ENCODE measurements at regions of chr6 and their contacts with region 1.

Region 1: DNA sequence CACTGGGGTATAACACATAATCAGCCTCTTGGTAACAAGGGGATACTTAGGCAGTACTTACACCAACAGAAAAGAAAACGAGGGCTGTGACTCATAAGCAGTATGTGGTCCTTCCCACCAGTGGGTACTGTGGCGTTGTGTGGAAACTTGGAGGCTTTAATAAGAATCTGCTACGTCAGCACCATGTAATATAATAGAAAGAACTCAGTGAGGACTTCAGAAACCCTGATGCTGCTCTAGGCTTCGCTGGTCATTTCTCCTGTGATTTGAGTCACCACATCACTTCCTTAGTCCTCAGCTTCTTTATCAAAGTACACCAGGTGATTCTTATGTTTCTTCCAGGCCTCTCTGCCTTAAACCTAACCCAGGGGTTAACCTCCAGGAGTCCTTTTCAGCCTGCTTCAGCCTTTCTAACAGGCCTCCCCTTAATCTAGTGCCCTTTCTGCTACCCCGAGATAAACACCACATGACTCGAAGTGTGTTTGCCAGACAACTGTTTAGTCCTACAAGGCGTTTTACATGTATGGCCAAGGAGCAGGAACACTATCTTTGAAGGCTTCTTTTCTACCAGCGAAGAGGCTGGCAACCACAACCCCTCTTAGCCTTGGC is 68.5 kb downstream of the FYN start:
- DNase-seq: peak; percentile 84
- ATAC-seq: peak; percentile 77
- H3K4me3 ChIP-seq: no peak overlapping the region
- H3K27ac ChIP-seq: peak overlapping the region; percentile 70
- H3K4me1 ChIP-seq: peaks cover 70% of the 10 kb centered on the region
- H3K27me3 ChIP-seq: no peaks in the 10 kb centered on the region
- CTCF ChIP-seq: peak in 2 of 3 experiments; percentile 24 to 35; a peak in 2 of 6 replicates
- EP300 ChIP-seq: peak; percentile 65 to 88; a peak in 2 of 4 replicates
- POLR2A ChIP-seq: no peak
- RAD21 ChIP-seq: peak; percentile 62

Region 2: GRCh38 chr6:111631903-111632460 is 172.7 kb before region 1 on chr6:
- CTCF ChIA-PET with region 1: no interaction called
- POLR2A ChIA-PET with region 1: no interaction called
- RAD21 ChIA-PET with region 1: no interaction called
- SMC1A ChIA-PET with region 1: no interaction called
- in situ Hi-C with region 1: no loop called
- intact Hi-C with region 1: no loop called
- DNase-seq: no peak
- ATAC-seq: no peak
- H3K4me3 ChIP-seq: no peak overlapping the region
- H3K27ac ChIP-seq: no peak overlapping the region
- H3K4me1 ChIP-seq: no peaks in the 10 kb centered on the region
- H3K27me3 ChIP-seq: 0 out of 4 replicates have a peak, but pooled peaks cover 0 to 4% of the 10 kb centered on the region in 2 experiments
- CTCF ChIP-seq: no peak
- EP300 ChIP-seq: no peak
- POLR2A ChIP-seq: no peak
- RAD21 ChIP-seq: no peak

Region 3: GRCh38 chr6:111750753-111751684 is 53.7 kb before region 1 on chr6:
- CTCF ChIA-PET with region 1: interaction called, 6 read pairs
- POLR2A ChIA-PET with region 1: interaction called, 3 read pairs
- RAD21 ChIA-PET with region 1: interaction called, 9 read pairs
- SMC1A ChIA-PET with region 1: interaction called, 20 read pairs
- in situ Hi-C with region 1: no loop called
- intact Hi-C with region 1: no loop called
- DNase-seq: no peak
- ATAC-seq: peak; percentile 83
- H3K4me3 ChIP-seq: no peak overlapping the region
- H3K27ac ChIP-seq: peak overlapping the region; percentile 85
- H3K4me1 ChIP-seq: peaks cover 69% of the 10 kb centered on the region
- H3K27me3 ChIP-seq: no peaks in the 10 kb centered on the region
- CTCF ChIP-seq: no peak
- EP300 ChIP-seq: peak; percentile 27 to 70; a peak in 2 of 4 replicates
- POLR2A ChIP-seq: no peak
- RAD21 ChIP-seq: peak; percentile 19; the same call in 1 of the 2 replicates

Region 4: GRCh38 chr6:111784433-111784832 is 20.3 kb before region 1 on chr6:
- CTCF ChIA-PET with region 1: interaction called, 3 read pairs
- POLR2A ChIA-PET with region 1: interaction called, 13 read pairs
- RAD21 ChIA-PET with region 1: interaction called, 9 read pairs
- SMC1A ChIA-PET with region 1: interaction called, 71 read pairs
- in situ Hi-C with region 1: no loop called
- intact Hi-C with region 1: no loop called
- DNase-seq: no peak
- ATAC-seq: no peak
- H3K4me3 ChIP-seq: no peak overlapping the region
- H3K27ac ChIP-seq: no peak overlapping the region
- H3K4me1 ChIP-seq: peaks cover 8% of the 10 kb centered on the region
- H3K27me3 ChIP-seq: no peaks in the 10 kb centered on the region
- CTCF ChIP-seq: no peak
- EP300 ChIP-seq: no peak
- POLR2A ChIP-seq: no peak
- RAD21 ChIP-seq: no peak

Region 5: DNA sequence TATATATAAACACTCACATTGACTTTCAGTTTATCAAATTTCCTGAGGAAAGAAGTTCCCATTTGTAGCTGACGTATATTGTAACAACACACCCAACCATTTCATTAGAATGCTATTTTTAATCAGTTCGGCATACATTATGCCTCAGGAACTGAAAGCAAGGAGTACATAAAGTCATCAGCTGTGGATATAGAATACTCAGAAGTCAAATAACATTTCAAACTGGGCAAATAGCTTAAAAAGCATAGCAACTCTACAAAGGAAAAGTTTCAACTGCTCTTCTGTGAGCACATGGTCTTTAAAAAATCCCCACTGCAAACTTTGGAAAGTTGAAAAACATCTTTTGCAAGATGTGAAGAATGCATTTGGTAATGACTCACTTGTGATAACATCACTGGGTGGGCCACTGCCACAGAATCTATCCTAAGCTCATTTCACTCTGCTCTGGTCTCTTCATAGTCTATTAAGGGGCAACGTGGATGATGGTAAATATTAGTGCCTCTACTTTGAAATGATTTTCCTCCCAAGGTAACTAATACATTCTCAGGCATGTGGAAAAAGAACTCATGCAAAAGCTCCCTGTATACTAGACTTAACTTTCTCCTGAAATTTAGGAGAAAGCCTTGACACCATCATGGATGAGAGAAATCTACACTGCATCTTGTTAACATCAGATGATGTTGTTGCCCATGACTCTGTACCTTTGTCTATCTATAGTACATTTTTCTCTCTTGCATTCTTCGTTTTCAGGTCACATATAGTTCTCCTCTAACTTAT is 19.3 kb after region 1 on chr6:
- CTCF ChIA-PET with region 1: interaction called, 10 read pairs
- POLR2A ChIA-PET with region 1: interaction called, 16 read pairs
- RAD21 ChIA-PET with region 1: interaction called, 18 read pairs
- SMC1A ChIA-PET with region 1: interaction called, 71 read pairs
- in situ Hi-C with region 1: no loop called
- intact Hi-C with region 1: no loop called
- DNase-seq: no peak
- ATAC-seq: peak; percentile 73
- H3K4me3 ChIP-seq: peak overlapping the region; percentile 45
- H3K27ac ChIP-seq: peak overlapping the region; percentile 57
- H3K4me1 ChIP-seq: peaks cover 32% of the 10 kb centered on the region
- H3K27me3 ChIP-seq: no peaks in the 10 kb centered on the region
- CTCF ChIP-seq: no peak
- EP300 ChIP-seq: no peak
- POLR2A ChIP-seq: no peak
- RAD21 ChIP-seq: no peak

Region 6: GRCh38 chr6:111850295-111850937 is 45.7 kb after region 1 on chr6:
- CTCF ChIA-PET with region 1: interaction called, 36 read pairs
- POLR2A ChIA-PET with region 1: interaction called, 6 read pairs
- RAD21 ChIA-PET with region 1: interaction called, 58 read pairs
- SMC1A ChIA-PET with region 1: interaction called, 91 read pairs
- in situ Hi-C with region 1: no loop called
- intact Hi-C with region 1: no loop called
- DNase-seq: no peak
- ATAC-seq: peak; percentile 73
- H3K4me3 ChIP-seq: no peak overlapping the region
- H3K27ac ChIP-seq: peak overlapping the region; percentile 60; the same call in 1 of the 2 replicates
- H3K4me1 ChIP-seq: peaks cover 40% of the 10 kb centered on the region
- H3K27me3 ChIP-seq: no peaks in the 10 kb centered on the region
- CTCF ChIP-seq: no peak
- EP300 ChIP-seq: 0 out of 4 replicates have a peak, but pooled peaks of 1 of the 2 experiments have one; percentile 23
- POLR2A ChIP-seq: no peak
- RAD21 ChIP-seq: no peak

Region 7: GRCh38 chr6:111912904-111913303 is 108.2 kb after region 1 on chr6:
- CTCF ChIA-PET with region 1: no interaction called
- POLR2A ChIA-PET with region 1: no interaction called
- RAD21 ChIA-PET with region 1: no interaction called
- SMC1A ChIA-PET with region 1: no interaction called
- in situ Hi-C with region 1: no loop called
- intact Hi-C with region 1: no loop called
- DNase-seq: no peak
- ATAC-seq: peak; percentile 32; the same call in 2 of the 3 replicates
- H3K4me3 ChIP-seq: no peak overlapping the region
- H3K27ac ChIP-seq: no peak overlapping the region
- H3K4me1 ChIP-seq: no peaks in the 10 kb centered on the region
- H3K27me3 ChIP-seq: no peaks in the 10 kb centered on the region
- CTCF ChIP-seq: no peak
- EP300 ChIP-seq: no peak
- POLR2A ChIP-seq: no peak
- RAD21 ChIP-seq: no peak

Region 8: DNA sequence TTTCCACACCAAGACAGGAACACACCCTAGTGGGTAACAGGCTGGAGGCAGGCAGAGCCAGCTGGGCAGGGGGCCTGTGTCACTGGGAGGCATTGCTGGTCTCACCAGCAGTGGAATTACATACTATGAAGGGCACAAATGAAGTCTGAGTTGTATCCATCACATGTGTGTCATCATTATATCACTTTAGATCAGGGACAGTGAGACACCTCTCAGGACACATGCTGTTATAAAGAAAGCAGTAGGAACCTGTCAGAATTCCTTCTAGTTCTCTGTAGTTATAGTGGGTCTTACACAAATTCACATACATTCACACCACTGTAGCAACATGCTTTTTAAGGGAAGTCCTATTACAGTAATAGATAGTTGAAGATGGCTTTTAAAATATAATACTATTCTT is 132.0 kb after region 1 on chr6:
- CTCF ChIA-PET with region 1: no interaction called
- POLR2A ChIA-PET with region 1: no interaction called
- RAD21 ChIA-PET with region 1: no interaction called
- SMC1A ChIA-PET with region 1: no interaction called
- in situ Hi-C with region 1: no loop called
- intact Hi-C with region 1: no loop called
- DNase-seq: no peak
- ATAC-seq: no peak
- H3K4me3 ChIP-seq: no peak overlapping the region
- H3K27ac ChIP-seq: no peak overlapping the region
- H3K4me1 ChIP-seq: no peaks in the 10 kb centered on the region
- H3K27me3 ChIP-seq: no peaks in the 10 kb centered on the region
- CTCF ChIP-seq: no peak
- EP300 ChIP-seq: no peak
- POLR2A ChIP-seq: no peak
- RAD21 ChIP-seq: no peak

Region 9: GRCh38 chr6:111997078-111997852 is 192.5 kb after region 1 on chr6:
- CTCF ChIA-PET with region 1: interaction called, 4 read pairs
- POLR2A ChIA-PET with region 1: interaction called, 3 read pairs
- RAD21 ChIA-PET with region 1: interaction called, 14 read pairs
- SMC1A ChIA-PET with region 1: interaction called, 22 read pairs
- in situ Hi-C with region 1: no loop called
- intact Hi-C with region 1: loop called (anchors 1 kb)
- DNase-seq: no peak
- ATAC-seq: peak; percentile 85
- H3K4me3 ChIP-seq: no peak overlapping the region
- H3K27ac ChIP-seq: no peak overlapping the region
- H3K4me1 ChIP-seq: peaks cover 28% of the 10 kb centered on the region
- H3K27me3 ChIP-seq: no peaks in the 10 kb centered on the region
- CTCF ChIP-seq: peak; percentile 85 to 95 (median 93); a peak in 5 of 6 replicates
- EP300 ChIP-seq: no peak
- POLR2A ChIP-seq: no peak
- RAD21 ChIP-seq: peak; percentile 99

Measured in GM12878 (cell line).